ENCODE measurements at regions of chr3 and their contacts with region 1.

Region 1: GRCh38 chr3:36729204-36730056 is 34.9 kb downstream of the DCLK3 start:
- DNase-seq: peak in 2 of 4 donors; percentile 48 to 64
- ATAC-seq: peak; percentile 92
- H3K4me3 ChIP-seq: no peak overlapping the region
- H3K27ac ChIP-seq: no peak overlapping the region
- H3K4me1 ChIP-seq: no peaks in the 10 kb centered on the region
- H3K27me3 ChIP-seq: no peaks in the 10 kb centered on the region
- CTCF ChIP-seq: peak; percentile 32 to 74

Region 2: DNA sequence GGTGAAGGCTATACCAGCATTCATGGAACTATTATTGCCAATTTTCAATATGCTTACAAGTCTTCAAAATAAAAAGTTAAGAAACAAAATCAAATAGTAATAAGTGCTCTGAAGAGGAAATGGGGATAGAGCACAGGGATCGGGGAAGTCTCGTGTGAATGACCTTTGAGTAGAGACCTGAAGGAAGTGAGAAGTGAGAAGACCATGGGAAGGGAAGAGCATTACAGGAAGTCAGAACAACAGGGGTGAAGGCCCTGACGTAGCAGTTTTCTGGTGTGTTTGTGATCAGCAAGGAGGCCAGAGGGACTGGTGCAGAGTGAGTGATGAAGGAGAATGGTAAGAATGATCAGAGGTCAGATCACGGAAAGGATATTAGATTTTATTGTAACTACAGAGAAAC is 301.0 kb before region 1 on chr3:
- intact Hi-C with region 1: no loop called
- DNase-seq: no peak
- ATAC-seq: peak; percentile 46
- H3K4me3 ChIP-seq: no peak overlapping the region
- H3K27ac ChIP-seq: no peak overlapping the region
- H3K4me1 ChIP-seq: no peaks in the 10 kb centered on the region
- H3K27me3 ChIP-seq: no peaks in the 10 kb centered on the region
- CTCF ChIP-seq: no peak

Region 3: GRCh38 chr3:36444909-36445308 is 284.5 kb before region 1 on chr3:
- intact Hi-C with region 1: no loop called
- DNase-seq: no peak
- ATAC-seq: no peak
- H3K4me3 ChIP-seq: no peak overlapping the region
- H3K27ac ChIP-seq: no peak overlapping the region
- H3K4me1 ChIP-seq: no peaks in the 10 kb centered on the region
- H3K27me3 ChIP-seq: no peaks in the 10 kb centered on the region
- CTCF ChIP-seq: no peak

Region 4: GRCh38 chr3:36868614-36869436 is 139.4 kb after region 1 on chr3:
- intact Hi-C with region 1: loop called in 1 of 2 experiments (anchors 2 kb)
- DNase-seq: peak in 2 of 4 donors; percentile 51 to 76
- ATAC-seq: peak; percentile 92
- H3K4me3 ChIP-seq: no peak overlapping the region
- H3K27ac ChIP-seq: no peak overlapping the region
- H3K4me1 ChIP-seq: peaks cover 0 to 6% of the 10 kb centered on the region in 2 donors
- H3K27me3 ChIP-seq: no peaks in the 10 kb centered on the region
- CTCF ChIP-seq: peak; percentile 78 to 84

Region 5: GRCh38 chr3:36969540-36970432 is 240.4 kb after region 1 on chr3:
- intact Hi-C with region 1: loop called in 1 of 2 experiments (anchors 10 kb)
- DNase-seq: no peak
- ATAC-seq: peak; percentile 75
- H3K4me3 ChIP-seq: no peak overlapping the region
- H3K27ac ChIP-seq: no peak overlapping the region
- H3K4me1 ChIP-seq: peaks cover 2 to 17% of the 10 kb centered on the region in 2 donors
- H3K27me3 ChIP-seq: no peaks in the 10 kb centered on the region
- CTCF ChIP-seq: no peak